ENCODE measurements at regions of chr19 and their contacts with region 1.

Region 1: GRCh38 chr19:11987405-11988281 is 22.8 kb downstream of the ZNF763 start:
- DNase-seq: peak; percentile 95 to 99 (median 97)
- ATAC-seq: peak; percentile 100
- H3K4me3 ChIP-seq: peak overlapping the region; percentile 59 to 96 (median 87)
- H3K27ac ChIP-seq: peak overlapping the region; percentile 55 to 95 (median 88)
- H3K4me1 ChIP-seq: peaks cover 0 to 11% (median 0%) of the 10 kb centered on the region in 12 donors
- H3K27me3 ChIP-seq: no peaks in the 10 kb centered on the region
- CTCF ChIP-seq: peak in 2 of 12 donors; percentile 2 to 8
- POLR2A ChIP-seq: peak in 1 of 2 donors; percentile 79

Region 2: DNA sequence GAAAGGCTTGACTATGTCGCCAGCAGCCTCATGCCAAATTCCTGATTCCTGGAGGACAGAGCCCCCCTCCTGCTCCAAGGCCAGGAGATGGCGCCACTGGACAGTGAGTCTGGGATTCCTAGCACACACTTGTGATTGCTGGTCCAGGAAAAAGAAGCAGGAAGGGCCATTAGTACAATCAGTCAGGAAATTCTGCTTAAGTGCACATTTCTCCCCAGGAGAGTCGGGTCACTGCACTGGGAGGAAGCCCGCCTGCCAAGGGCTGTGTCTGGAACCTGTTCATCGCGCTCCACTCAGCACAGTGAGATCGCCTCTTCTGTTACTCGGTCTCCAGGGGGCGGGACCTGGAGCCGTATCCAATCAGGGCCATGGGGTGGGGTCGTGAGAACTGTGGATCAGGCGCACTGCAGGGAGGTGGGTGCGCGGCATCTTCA is 314.0 kb before region 1 on chr19:
- intact Hi-C with region 1: loop called in 1 of 10 experiments (anchors 10 kb)
- DNase-seq: peak; percentile 72 to 81 (median 76)
- ATAC-seq: peak; percentile 88 to 97 (median 95)
- H3K4me3 ChIP-seq: peak overlapping the region; percentile 31 to 76 (median 57)
- H3K27ac ChIP-seq: peak overlapping the region in 8 of 12 donors; percentile 2 to 53 (median 30)
- H3K4me1 ChIP-seq: peaks cover 0 to 13% (median 6%) of the 10 kb centered on the region in 12 donors
- H3K27me3 ChIP-seq: peaks cover 0 to 3% (median 0%) of the 10 kb centered on the region in 9 donors
- CTCF ChIP-seq: peak; percentile 70 to 93 (median 82)
- POLR2A ChIP-seq: no peak

Region 3: GRCh38 chr19:11881151-11881800 is 106.4 kb before region 1 on chr19:
- intact Hi-C with region 1: loop called (anchors 1 to 10 kb)
- DNase-seq: peak in 4 of 5 donors; percentile 37 to 48 (median 43)
- ATAC-seq: peak in 3 of 4 donors; percentile 76 to 83 (median 79)
- H3K4me3 ChIP-seq: peak overlapping the region in 2 of 12 donors; percentile 8 to 17
- H3K27ac ChIP-seq: no peak overlapping the region
- H3K4me1 ChIP-seq: peaks cover 0 to 4% (median 0%) of the 10 kb centered on the region in 12 donors
- H3K27me3 ChIP-seq: no peaks in the 10 kb centered on the region
- CTCF ChIP-seq: peak; percentile 51 to 81 (median 72)
- POLR2A ChIP-seq: no peak

Region 4: GRCh38 chr19:11887611-11888531 is 99.8 kb before region 1 on chr19 and contains the start of gene ZNF69:
- intact Hi-C with region 1: loop called in 6 of 10 experiments (anchors 2 to 10 kb)
- DNase-seq: peak; percentile 88 to 94 (median 89)
- ATAC-seq: peak; percentile 95 to 100 (median 99)
- H3K4me3 ChIP-seq: peak within 1 kb of the TSS; percentile 66 to 85 (median 70)
- H3K27ac ChIP-seq: peak within 1 kb of the TSS; percentile 10 to 90 (median 84)
- H3K4me1 ChIP-seq: peaks cover 0 to 15% (median 9%) of the 10 kb centered on the region in 12 donors
- H3K27me3 ChIP-seq: no peaks in the 10 kb centered on the region
- CTCF ChIP-seq: peak in 4 of 12 donors; percentile 23 to 51 (median 33)
- POLR2A ChIP-seq: peak in 1 of 2 donors; percentile 44
- total RNA-seq, gene ZNF69: 2.8 to 5.4 (median 4.2) TPM

Region 5: DNA sequence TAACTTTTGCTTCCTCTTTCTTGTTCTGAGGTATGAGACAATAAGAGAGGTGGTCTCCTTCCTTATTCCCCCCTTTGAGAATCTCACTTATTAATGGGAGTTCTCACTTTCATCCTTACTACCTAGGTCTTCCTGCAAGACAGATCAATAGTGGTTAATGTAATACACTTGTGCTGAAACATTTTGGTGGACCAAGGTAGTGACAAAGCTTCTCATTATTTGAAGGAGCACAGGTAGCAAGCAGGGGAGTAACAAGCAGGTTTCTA is 44.9 kb before region 1 on chr19:
- intact Hi-C with region 1: no loop called
- DNase-seq: no peak
- ATAC-seq: no peak
- H3K4me3 ChIP-seq: no peak overlapping the region
- H3K27ac ChIP-seq: no peak overlapping the region
- H3K4me1 ChIP-seq: no peaks in the 10 kb centered on the region
- H3K27me3 ChIP-seq: no peaks in the 10 kb centered on the region
- CTCF ChIP-seq: no peak
- POLR2A ChIP-seq: no peak

Region 6: DNA sequence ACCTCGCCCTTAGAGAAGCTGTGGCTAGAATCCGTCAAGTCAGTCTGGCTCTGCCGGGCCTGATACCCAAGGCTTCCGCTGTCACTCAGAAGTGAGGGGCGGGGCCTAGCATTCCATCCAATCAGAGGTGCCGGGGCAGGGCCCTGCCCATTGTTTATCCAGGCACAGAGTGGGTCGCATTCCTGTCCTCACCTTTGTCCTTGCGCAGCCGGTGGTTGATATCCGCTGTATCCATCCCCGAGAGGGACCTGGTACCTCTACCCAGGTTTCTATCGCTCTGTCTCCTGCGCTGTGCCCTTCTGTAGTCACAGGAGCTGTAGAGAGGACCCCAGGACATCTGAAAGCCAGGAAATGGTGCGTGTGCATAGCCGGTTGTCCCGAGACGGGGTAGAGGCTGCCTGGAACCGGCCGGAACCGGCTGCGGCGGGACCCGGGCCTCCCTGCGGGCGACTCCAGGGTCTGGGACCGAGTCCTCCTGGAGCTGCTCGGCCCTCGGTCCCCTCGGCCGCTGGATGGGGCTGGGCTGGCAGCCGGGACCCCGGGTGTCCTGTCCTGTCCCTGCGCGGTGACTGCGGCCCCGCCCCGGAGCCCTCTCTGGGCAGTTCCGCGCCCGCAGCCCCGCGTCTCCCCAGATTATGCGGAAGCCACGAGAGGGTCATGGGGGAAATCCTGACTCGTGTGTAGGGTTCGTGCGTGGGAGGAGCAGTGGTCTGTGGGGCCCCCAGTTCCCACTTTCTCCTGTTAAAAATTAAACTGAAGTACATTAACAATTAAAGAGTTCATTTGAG is 22.6 kb before region 1 on chr19 and contains the start of gene ZNF763:
- intact Hi-C with region 1: loop called in 9 of 10 experiments (anchors 1 to 2 kb)
- DNase-seq: peak; percentile 94 to 97 (median 95)
- ATAC-seq: peak; percentile 99
- H3K4me3 ChIP-seq: peak within 1 kb of the TSS; percentile 59 to 94 (median 78)
- H3K27ac ChIP-seq: peak within 1 kb of the TSS; percentile 73 to 99 (median 92)
- H3K4me1 ChIP-seq: peaks cover 0 to 22% (median 13%) of the 10 kb centered on the region in 12 donors
- H3K27me3 ChIP-seq: no peaks in the 10 kb centered on the region
- CTCF ChIP-seq: peak in 1 of 12 donors; percentile 0
- POLR2A ChIP-seq: peak in 1 of 2 donors; percentile 83
- total RNA-seq, gene ZNF763: 1.3 to 6.2 (median 5.0) TPM

Region 7: GRCh38 chr19:12034198-12034597 is 46.6 kb after region 1 on chr19:
- intact Hi-C with region 1: no loop called
- DNase-seq: no peak
- ATAC-seq: no peak
- H3K4me3 ChIP-seq: peak overlapping the region in 8 of 12 donors; percentile 70 to 100 (median 82)
- H3K27ac ChIP-seq: no peak overlapping the region
- H3K4me1 ChIP-seq: peaks cover 0 to 19% (median 12%) of the 10 kb centered on the region in 12 donors
- H3K27me3 ChIP-seq: no peaks in the 10 kb centered on the region
- CTCF ChIP-seq: no peak
- POLR2A ChIP-seq: no peak

Measured in heart left ventricle (tissue), 16 donors.